ENCODE measurements at regions of chr5 and their contacts with region 1.

Region 1: GRCh38 chr5:9544502-9545135 is 1.3 kb downstream of the SEMA5A start:
- DNase-seq: peak; percentile 80
- ATAC-seq: peak; percentile 48
- H3K4me3 ChIP-seq: peak overlapping the region; percentile 73
- H3K27ac ChIP-seq: peak overlapping the region; percentile 35
- H3K4me1 ChIP-seq: peaks cover 4% of the 10 kb centered on the region
- H3K27me3 ChIP-seq: no peaks in the 10 kb centered on the region
- CTCF ChIP-seq: peak; percentile 96
- POLR2A ChIP-seq: 0 out of 2 replicates have a peak, but pooled peaks have one; percentile 42
- RAD21 ChIP-seq: peak; percentile 91

Region 2: DNA sequence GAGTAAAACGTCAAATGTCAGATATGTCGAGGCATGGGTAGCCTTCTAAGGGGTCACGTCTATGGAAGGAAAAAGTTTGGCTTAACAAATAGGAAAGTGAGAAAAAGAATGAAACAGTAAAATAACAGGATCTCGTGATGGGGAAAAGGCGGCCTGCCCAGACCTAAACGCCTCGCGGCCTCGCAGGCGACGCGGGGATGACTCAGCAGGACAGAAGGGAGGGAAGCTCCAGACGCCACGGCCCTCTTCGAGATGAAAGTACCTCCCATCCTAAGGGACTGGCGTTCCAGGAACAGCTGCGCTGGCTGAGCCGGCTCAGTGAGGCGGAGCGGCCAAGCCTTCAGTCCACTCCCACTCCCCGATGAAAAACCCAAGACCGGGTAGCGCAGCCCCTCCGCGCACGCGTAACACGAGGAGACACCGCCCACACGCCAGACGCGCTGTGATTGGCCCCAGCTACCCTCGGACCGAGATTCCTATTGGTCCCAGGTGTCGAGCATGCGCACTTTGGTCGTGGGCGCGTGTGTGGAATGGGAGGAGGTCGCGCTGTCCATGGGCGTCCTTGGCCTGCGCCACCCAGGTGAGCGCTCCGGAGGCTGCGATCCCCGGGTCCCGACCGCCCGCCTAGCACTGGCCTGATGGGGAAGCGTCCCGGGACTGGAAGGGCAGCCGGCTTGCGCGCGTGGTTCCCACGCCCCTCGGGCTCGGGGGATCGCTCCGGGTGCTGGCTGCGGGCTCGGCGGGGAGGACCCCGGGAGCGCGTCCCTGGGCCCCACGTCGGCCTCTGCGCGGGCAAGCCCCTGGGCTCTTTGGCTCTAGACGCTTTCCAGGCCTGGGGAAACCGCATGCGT is 1087.2 kb before region 1 on chr5:
- CTCF ChIA-PET with region 1: no interaction called
- POLR2A ChIA-PET with region 1: no interaction called
- dilution Hi-C with region 1: no loop called
- in situ Hi-C with region 1: no loop called
- intact Hi-C with region 1: loop called (anchors 5 kb)
- DNase-seq: peak; percentile 98
- ATAC-seq: peak; percentile 98
- H3K4me3 ChIP-seq: peak overlapping the region; percentile 82
- H3K27ac ChIP-seq: peak overlapping the region; percentile 71
- H3K4me1 ChIP-seq: 0 out of 2 replicates have a peak, but pooled peaks cover 2% of the 10 kb centered on the region
- H3K27me3 ChIP-seq: no peaks in the 10 kb centered on the region
- CTCF ChIP-seq: no peak
- POLR2A ChIP-seq: peak; percentile 76
- RAD21 ChIP-seq: no peak

Region 3: GRCh38 chr5:9156282-9156681 is 388.3 kb before region 1 on chr5:
- CTCF ChIA-PET with region 1: interaction called, 3 read pairs
- POLR2A ChIA-PET with region 1: no interaction called
- dilution Hi-C with region 1: no loop called
- in situ Hi-C with region 1: no loop called
- intact Hi-C with region 1: loop called (anchors 1 kb)
- DNase-seq: peak; percentile 83
- ATAC-seq: peak; percentile 86
- H3K4me3 ChIP-seq: no peak overlapping the region
- H3K27ac ChIP-seq: peak overlapping the region; percentile 1; the same call in 1 of the 2 replicates
- H3K4me1 ChIP-seq: peaks cover 10% of the 10 kb centered on the region
- H3K27me3 ChIP-seq: no peaks in the 10 kb centered on the region
- CTCF ChIP-seq: peak; percentile 73
- POLR2A ChIP-seq: no peak
- RAD21 ChIP-seq: peak; percentile 86

Region 4: DNA sequence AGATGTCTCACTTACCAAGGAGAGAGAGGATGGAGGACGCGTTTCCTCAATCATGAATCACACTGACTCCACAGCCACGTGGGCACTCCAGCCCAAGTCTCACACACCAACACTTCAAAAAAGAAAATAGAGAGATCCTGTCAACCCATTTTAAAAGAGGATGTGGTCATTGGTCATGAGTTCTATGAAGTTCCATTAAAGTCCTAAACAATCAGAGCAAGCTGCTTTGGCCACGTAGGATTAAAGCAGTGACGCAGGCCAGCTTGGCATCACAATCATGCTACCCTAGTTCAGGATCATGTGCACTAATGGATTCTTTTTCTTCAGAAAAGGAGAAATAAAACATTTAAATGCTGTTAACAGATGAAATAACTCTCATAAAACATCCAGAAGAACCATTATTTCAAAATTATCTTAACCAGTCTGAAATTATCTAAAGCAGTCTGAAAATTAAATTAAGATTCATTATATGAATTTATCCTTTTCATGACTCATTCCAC is 106.8 kb before region 1 on chr5:
- CTCF ChIA-PET with region 1: no interaction called
- POLR2A ChIA-PET with region 1: no interaction called
- dilution Hi-C with region 1: no loop called
- in situ Hi-C with region 1: no loop called
- intact Hi-C with region 1: no loop called
- DNase-seq: peak; percentile 86
- ATAC-seq: no peak
- H3K4me3 ChIP-seq: no peak overlapping the region
- H3K27ac ChIP-seq: no peak overlapping the region
- H3K4me1 ChIP-seq: peaks cover 15% of the 10 kb centered on the region
- H3K27me3 ChIP-seq: no peaks in the 10 kb centered on the region
- CTCF ChIP-seq: no peak
- POLR2A ChIP-seq: no peak
- RAD21 ChIP-seq: no peak

Region 5: GRCh38 chr5:9698125-9698826 is 153.7 kb after region 1 on chr5:
- CTCF ChIA-PET with region 1: no interaction called
- POLR2A ChIA-PET with region 1: no interaction called
- dilution Hi-C with region 1: no loop called
- in situ Hi-C with region 1: no loop called
- intact Hi-C with region 1: loop called (anchors 5 kb)
- DNase-seq: peak; percentile 71
- ATAC-seq: peak; percentile 83
- H3K4me3 ChIP-seq: no peak overlapping the region
- H3K27ac ChIP-seq: peak overlapping the region; percentile 24; the same call in 1 of the 2 replicates
- H3K4me1 ChIP-seq: peaks cover 5% of the 10 kb centered on the region; the same call in 1 of the 2 replicates
- H3K27me3 ChIP-seq: no peaks in the 10 kb centered on the region
- CTCF ChIP-seq: no peak
- POLR2A ChIP-seq: no peak
- RAD21 ChIP-seq: no peak

Region 6: DNA sequence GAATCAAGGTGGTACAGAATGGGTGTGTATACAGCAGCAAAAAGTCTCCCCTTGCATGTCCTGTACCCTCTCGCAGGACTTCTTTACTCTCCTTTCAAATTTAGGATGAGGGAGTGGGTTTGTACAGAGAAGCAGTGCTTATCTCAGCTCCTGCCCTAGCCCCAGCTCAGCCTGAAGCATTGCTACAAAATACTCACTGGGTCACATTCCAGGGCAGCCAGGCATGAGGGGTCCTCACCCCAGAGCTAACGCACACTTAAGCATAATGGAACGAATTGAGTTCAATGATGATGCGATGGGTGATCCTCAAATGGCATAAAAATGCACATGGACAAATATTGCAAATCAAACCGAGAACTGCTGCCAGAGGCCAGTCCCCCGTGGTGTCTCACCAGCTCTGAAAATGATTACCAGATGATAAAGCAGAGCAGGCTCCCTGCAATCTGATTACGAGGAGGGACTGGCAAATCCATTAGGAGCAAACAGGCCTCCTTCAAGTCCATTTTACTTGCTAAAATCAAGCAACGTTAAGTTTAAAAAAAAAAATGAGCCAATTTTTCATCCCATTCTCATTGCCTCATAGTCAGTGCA is 317.1 kb after region 1 on chr5:
- CTCF ChIA-PET with region 1: no interaction called
- POLR2A ChIA-PET with region 1: no interaction called
- dilution Hi-C with region 1: no loop called
- in situ Hi-C with region 1: no loop called
- intact Hi-C with region 1: no loop called
- DNase-seq: peak; percentile 33
- ATAC-seq: no peak
- H3K4me3 ChIP-seq: no peak overlapping the region
- H3K27ac ChIP-seq: no peak overlapping the region
- H3K4me1 ChIP-seq: no peaks in the 10 kb centered on the region
- H3K27me3 ChIP-seq: peaks cover 12% of the 10 kb centered on the region
- CTCF ChIP-seq: no peak
- POLR2A ChIP-seq: no peak
- RAD21 ChIP-seq: no peak

Region 7: GRCh38 chr5:10018203-10019060 is 473.8 kb after region 1 on chr5:
- CTCF ChIA-PET with region 1: no interaction called
- POLR2A ChIA-PET with region 1: no interaction called
- dilution Hi-C with region 1: no loop called
- in situ Hi-C with region 1: no loop called
- intact Hi-C with region 1: loop called (anchors 2 kb)
- DNase-seq: peak; percentile 96
- ATAC-seq: peak; percentile 89
- H3K4me3 ChIP-seq: no peak overlapping the region
- H3K27ac ChIP-seq: peak overlapping the region; percentile 85
- H3K4me1 ChIP-seq: peaks cover 13% of the 10 kb centered on the region
- H3K27me3 ChIP-seq: no peaks in the 10 kb centered on the region
- CTCF ChIP-seq: no peak
- POLR2A ChIP-seq: no peak
- RAD21 ChIP-seq: no peak

Region 8: DNA sequence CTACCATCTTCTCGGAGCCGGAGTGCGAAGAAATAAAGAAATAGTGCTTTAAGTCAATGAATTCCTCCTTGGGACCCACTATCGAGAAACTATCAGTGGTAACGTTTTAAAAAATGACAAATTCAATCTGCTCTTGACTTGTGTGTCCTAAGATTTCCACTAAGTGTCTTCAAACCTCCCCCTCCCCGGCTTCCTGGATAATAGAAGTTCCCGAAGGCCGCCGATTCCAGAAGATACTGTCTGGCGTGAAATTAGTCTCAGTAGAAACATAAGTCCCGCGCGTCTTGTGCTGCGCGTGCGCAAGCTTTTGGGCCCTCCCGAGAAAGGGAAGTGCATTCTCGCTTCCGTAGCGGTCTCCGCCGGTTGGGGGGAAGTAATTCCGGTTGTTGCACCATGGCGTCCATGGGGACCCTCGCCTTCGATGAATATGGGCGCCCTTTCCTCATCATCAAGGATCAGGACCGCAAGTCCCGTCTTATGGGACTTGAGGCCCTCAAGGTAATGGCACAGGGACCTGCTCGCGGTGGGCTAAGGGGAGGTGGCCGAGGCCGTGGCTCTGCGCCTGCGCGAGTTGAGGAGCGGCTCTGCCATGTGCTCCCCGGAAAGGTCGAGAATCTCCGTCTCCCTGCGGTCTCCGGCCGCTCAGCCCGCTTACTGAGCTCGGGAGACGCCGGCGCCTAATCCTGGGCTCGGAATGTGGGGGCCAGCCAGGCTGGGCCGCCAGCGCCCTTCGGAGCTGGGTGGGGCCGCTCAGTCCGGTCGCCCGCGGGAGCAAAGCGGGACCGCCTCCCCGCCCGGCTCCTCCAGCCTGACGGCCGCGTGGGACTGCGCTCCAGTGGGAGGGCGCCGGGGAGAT is 705.6 kb after region 1 on chr5 and contains the start of gene CCT5:
- CTCF ChIA-PET with region 1: interaction called, 5 read pairs
- POLR2A ChIA-PET with region 1: no interaction called
- dilution Hi-C with region 1: no loop called
- in situ Hi-C with region 1: no loop called
- intact Hi-C with region 1: loop called (anchors 2 kb)
- DNase-seq: peak; percentile 99
- ATAC-seq: peak; percentile 88
- H3K4me3 ChIP-seq: peak within 1 kb of the TSS; percentile 92
- H3K27ac ChIP-seq: peak within 1 kb of the TSS; percentile 96
- H3K4me1 ChIP-seq: peaks cover 8% of the 10 kb centered on the region
- H3K27me3 ChIP-seq: no peaks in the 10 kb centered on the region
- CTCF ChIP-seq: no peak
- POLR2A ChIP-seq: peak; percentile 88
- RAD21 ChIP-seq: no peak
- total RNA-seq, gene CCT5: 481 and 875 TPM in 2 replicates